ENCODE measurements at regions of chr18 and their contacts with region 1.

Region 1: DNA sequence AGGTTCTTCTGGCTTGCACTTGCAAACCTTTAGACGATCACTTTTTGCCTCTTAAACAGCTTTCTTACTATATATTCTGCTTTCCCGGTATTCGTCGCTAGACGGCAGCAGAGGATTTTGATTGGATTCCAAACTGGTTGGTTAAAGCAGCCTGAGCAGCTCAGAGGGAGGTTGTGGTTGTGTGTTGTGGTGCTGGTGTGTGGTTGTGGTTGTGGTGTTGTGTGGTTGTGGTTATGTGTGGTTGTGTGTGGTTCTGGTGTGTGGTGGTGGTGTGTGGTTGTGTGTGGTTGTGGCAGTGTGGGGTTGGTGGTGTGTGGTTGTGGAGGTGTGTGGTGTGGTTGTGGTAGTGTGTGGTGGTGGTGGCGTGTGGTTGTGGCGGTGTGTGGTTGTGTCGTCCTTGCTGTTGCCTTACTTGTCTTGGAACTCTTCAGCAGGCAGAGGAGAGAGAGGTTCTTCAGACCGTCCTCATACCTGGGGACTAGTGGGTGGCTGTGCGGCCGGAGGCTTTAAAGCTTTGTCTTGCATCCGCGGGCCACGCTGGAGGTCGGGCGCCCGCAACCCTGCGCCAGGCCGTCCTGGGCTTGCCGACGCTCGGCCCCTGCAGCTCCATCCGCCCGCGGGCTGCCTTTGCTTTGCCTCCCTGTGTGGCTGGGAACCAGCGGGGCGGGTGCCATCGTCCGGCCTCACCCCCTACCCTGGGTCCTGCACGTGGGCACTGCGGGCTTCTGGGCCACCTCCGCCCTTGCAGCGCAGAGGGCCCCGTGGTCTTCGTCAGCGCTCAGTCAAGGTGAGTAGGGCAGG is 190.8 kb downstream of the ARHGAP28 start:
- DNase-seq: no peak
- H3K4me3 ChIP-seq: no peak overlapping the region
- H3K27ac ChIP-seq: no peak overlapping the region
- H3K4me1 ChIP-seq: no peaks in the 10 kb centered on the region
- H3K27me3 ChIP-seq: no peaks in the 10 kb centered on the region
- CTCF ChIP-seq: peak in 2 of 3 experiments; percentile 22 to 33
- POLR2A ChIP-seq: no peak

Region 2: GRCh38 chr18:6714010-6714409 is 206.3 kb before region 1 on chr18:
- intact Hi-C with region 1: no loop called
- DNase-seq: no peak
- H3K4me3 ChIP-seq: no peak overlapping the region
- H3K27ac ChIP-seq: no peak overlapping the region
- H3K4me1 ChIP-seq: no peaks in the 10 kb centered on the region
- H3K27me3 ChIP-seq: no peaks in the 10 kb centered on the region
- CTCF ChIP-seq: no peak
- POLR2A ChIP-seq: no peak

Region 3: GRCh38 chr18:7177116-7177744 is 256.9 kb after region 1 on chr18:
- intact Hi-C with region 1: loop called (anchors 10 kb)
- DNase-seq: no peak
- H3K4me3 ChIP-seq: no peak overlapping the region
- H3K27ac ChIP-seq: no peak overlapping the region
- H3K4me1 ChIP-seq: no peaks in the 10 kb centered on the region
- H3K27me3 ChIP-seq: no peaks in the 10 kb centered on the region
- CTCF ChIP-seq: peak; percentile 36 to 73 (median 59)
- POLR2A ChIP-seq: no peak